ENCODE measurements at regions of chr2 and their contacts with region 1.

Region 1: DNA sequence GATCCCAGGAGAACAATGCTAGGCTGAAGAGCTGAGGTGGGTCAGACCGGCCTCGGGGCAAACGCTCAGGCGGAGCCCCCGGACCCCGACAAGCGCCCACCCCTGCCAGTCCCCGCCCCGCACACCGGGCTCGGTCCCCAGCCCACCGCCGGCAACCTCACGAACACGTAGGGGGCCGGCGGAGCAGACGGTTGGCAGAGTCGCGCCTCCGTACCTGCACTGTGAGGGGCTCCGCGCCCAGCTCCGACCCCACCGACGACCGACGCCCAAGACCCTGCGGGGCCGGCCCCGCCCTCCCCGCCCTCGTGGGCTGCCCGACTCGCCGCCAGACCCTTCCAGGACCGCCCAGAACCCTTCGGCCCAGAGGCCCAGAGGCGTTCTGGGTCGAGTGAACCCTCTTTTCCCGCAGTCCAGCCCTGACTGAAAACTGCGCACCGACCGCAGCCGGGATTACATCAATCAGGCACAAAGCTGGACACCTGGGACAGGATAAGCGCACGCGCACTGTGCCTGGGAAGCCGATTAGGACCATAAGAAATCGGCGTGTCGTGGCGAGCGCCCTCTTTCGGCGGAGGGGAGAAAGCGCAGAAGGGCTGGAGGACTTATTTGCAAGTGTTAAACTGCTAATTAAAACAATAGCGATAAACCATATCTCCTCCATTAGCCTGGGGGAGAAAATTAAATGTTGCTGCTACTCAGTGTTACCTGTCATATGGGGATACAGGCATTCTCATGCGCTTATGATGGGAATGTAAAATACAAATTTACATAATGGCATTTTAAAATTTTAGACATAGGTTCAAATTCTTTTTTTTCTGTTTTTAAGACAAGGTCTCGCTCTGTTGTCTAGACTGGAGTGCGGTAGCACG is 11.7 kb upstream of the DCTN1 start:
- DNase-seq: peak; percentile 90 to 98
- H3K4me3 ChIP-seq: peak overlapping the region; percentile 86 to 96 (median 90)
- H3K27ac ChIP-seq: peak overlapping the region; percentile 98
- H3K4me1 ChIP-seq: peaks cover 0 to 3% (median 0%) of the 10 kb centered on the region in 4 experiments; a peak in 4 of 7 replicates
- H3K27me3 ChIP-seq: no peaks in the 10 kb centered on the region
- CTCF ChIP-seq: peak; percentile 75 to 98 (median 97)
- EP300 ChIP-seq: no peak
- POLR2A ChIP-seq: peak in 1 of 2 experiments; percentile 93; a peak in 2 of 3 replicates
- RAD21 ChIP-seq: peak; percentile 41 to 42

Region 2: DNA sequence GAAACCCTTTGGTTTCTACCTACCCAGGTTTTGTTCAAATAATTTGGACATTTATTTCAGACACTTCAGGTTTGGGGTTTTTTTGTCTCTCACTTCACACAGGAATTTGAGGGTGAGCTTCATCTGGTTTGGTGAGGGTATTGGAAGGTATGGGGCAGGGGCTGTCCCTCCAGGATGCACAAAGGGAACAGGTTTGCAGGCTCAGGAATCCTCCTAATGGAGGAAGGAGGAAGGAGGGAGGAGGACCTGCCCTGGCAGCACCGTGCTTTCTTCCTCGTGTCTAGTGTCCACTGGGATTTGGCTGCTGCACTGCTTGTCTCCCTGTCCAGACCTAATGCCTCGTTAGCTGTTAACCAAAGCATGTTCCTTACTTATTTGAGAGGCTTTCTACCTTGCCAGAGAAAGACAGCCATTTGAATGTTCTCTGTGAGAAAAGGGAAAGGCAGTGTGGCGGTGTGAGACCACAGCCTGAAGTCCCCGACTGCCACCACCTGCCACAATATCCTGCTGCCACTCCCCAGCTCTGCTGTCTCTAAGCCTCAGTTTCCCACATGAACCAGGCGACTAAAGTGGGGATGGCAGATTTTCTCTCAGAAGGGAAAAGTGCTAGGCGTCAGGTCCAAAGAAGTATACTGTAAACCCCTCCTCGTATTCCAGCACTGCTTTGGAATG is 46.4 kb before region 1 on chr2:
- CTCF ChIA-PET with region 1: interaction called, 15 read pairs
- POLR2A ChIA-PET with region 1: no interaction called
- DNase-seq: no peak
- H3K4me3 ChIP-seq: no peak overlapping the region
- H3K27ac ChIP-seq: no peak overlapping the region
- H3K4me1 ChIP-seq: no peaks in the 10 kb centered on the region
- H3K27me3 ChIP-seq: no peaks in the 10 kb centered on the region
- CTCF ChIP-seq: no peak
- EP300 ChIP-seq: no peak
- POLR2A ChIP-seq: no peak
- RAD21 ChIP-seq: no peak

Region 3: GRCh38 chr2:74357627-74358026 is 34.2 kb before region 1 on chr2:
- CTCF ChIA-PET with region 1: interaction called, 15 read pairs
- POLR2A ChIA-PET with region 1: interaction called, 12 read pairs
- DNase-seq: no peak
- H3K4me3 ChIP-seq: no peak overlapping the region
- H3K27ac ChIP-seq: no peak overlapping the region
- H3K4me1 ChIP-seq: peaks cover 0 to 2% (median 0%) of the 10 kb centered on the region in 4 experiments; a peak in 2 of 7 replicates
- H3K27me3 ChIP-seq: no peaks in the 10 kb centered on the region
- CTCF ChIP-seq: no peak
- EP300 ChIP-seq: no peak
- POLR2A ChIP-seq: no peak
- RAD21 ChIP-seq: no peak

Region 4: DNA sequence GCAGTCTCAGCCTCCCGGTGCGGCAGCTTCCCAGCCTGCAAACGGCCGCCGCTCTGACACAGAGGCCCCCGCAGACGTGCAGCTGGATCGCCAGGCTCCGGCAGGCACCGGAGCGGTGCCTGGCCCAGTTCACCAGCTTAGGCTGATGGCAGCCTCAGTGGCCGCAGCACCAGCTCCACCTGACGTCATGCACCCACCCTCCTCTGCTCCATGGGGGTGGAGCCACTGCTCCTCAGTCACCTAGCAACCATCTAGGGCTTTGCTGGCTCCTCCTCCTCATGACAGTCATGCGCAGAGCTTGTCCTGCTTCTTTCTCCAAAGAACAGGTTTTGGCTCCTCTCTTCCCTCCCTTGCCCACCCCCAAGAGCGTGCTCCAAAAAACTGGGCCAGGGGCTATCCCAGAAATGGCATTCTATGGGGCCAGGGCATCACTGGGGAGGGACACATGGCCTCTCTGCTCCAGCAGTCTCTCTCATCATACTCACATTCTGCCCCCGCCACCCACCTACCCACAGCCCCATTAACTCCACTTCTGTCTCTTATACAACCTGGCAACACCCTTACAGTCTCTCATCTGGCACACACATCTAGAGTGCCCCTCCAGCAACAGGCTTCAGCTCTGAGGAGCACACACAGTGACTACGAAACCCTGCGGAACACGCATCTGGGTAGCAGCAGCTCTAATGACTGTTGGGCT is 17.2 kb before region 1 on chr2:
- CTCF ChIA-PET with region 1: interaction called, 16 read pairs
- POLR2A ChIA-PET with region 1: interaction called, 15 read pairs
- DNase-seq: peak; percentile 59 to 87
- H3K4me3 ChIP-seq: peak overlapping the region; percentile 27 to 59 (median 53); a peak in 7 of 8 replicates
- H3K27ac ChIP-seq: peak overlapping the region; percentile 61; the same call in 1 of the 2 replicates
- H3K4me1 ChIP-seq: peaks cover 9 to 22% (median 13%) of the 10 kb centered on the region in 4 experiments
- H3K27me3 ChIP-seq: no peaks in the 10 kb centered on the region
- CTCF ChIP-seq: no peak
- EP300 ChIP-seq: no peak
- POLR2A ChIP-seq: peak in 1 of 2 experiments; percentile 67; a peak in 1 of 3 replicates
- RAD21 ChIP-seq: no peak

Region 5: DNA sequence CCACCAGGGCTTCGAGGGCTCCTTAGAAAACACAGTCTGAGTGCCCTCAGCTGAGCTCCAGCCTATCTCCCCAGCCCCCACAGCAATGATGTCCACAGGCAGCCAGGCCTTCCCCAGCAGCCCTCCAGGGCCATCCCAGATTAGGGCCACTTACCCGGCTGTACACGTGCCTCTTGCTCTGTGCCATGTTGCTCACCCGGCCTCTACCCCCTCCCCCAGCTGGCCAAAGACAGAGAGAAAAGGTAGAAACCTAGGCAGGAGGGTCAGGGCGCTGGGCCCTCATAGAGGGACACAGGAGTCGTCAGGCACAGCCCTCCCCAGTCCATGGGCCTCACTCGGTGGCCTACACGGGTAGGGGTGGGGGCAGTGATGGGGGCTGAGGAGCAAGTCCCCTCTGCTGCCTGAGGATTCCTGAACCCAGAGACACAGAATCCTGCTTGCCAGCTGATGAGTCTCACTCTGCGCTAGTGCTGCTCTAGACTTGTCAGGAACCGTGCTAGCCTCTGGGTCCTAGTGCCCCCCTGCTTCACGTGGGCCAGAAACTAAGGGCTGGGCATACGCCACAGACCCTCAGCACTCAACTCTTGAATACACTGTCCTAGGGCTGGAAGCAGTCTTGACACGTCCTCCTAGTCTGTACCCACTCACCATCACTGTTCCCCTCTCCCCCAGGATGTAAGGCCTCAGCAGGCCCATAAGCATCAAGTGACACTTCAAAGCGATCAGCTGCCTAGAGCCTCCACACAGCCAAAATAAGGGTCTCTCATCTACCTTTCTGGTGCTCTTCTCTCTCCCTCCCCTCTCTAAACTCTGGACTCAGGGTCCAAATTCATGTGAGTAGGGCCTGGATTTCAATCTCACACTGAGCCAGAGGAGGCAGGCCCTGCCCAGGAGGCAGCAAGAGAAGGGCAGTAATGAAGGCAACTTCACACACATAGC is 11.7 kb before region 1 on chr2 and contains the start of gene DCTN1:
- CTCF ChIA-PET with region 1: interaction called, 16 read pairs
- POLR2A ChIA-PET with region 1: interaction called, 15 read pairs
- DNase-seq: peak in 1 of 2 experiments; percentile 63
- H3K4me3 ChIP-seq: peak within 1 kb of the TSS in 3 of 4 experiments; percentile 23 to 50 (median 40); a peak in 6 of 8 replicates
- H3K27ac ChIP-seq: peak within 1 kb of the TSS; percentile 36; the same call in 1 of the 2 replicates
- H3K4me1 ChIP-seq: peaks cover 0 to 10% (median 7%) of the 10 kb centered on the region in 4 experiments; a peak in 6 of 7 replicates
- H3K27me3 ChIP-seq: no peaks in the 10 kb centered on the region
- CTCF ChIP-seq: no peak
- EP300 ChIP-seq: no peak
- POLR2A ChIP-seq: no peak
- RAD21 ChIP-seq: no peak
- total RNA-seq, gene DCTN1: 156 and 162 TPM in 2 replicates

Region 6: GRCh38 chr2:74440378-74441169 is 48.8 kb after region 1 on chr2:
- CTCF ChIA-PET with region 1: interaction called, 4 read pairs
- POLR2A ChIA-PET with region 1: interaction called, 16 read pairs
- DNase-seq: peak in 1 of 2 experiments; percentile 92
- H3K4me3 ChIP-seq: peak overlapping the region; percentile 69 to 90 (median 80)
- H3K27ac ChIP-seq: peak overlapping the region; percentile 87
- H3K4me1 ChIP-seq: peaks cover 4 to 24% (median 17%) of the 10 kb centered on the region in 4 experiments; a peak in 6 of 7 replicates
- H3K27me3 ChIP-seq: no peaks in the 10 kb centered on the region; a peak in 2 of 7 replicates
- CTCF ChIP-seq: peak in 2 of 3 experiments; percentile 12 to 18; a peak in 2 of 4 replicates
- EP300 ChIP-seq: no peak
- POLR2A ChIP-seq: peak in 1 of 2 experiments; percentile 50; a peak in 1 of 3 replicates
- RAD21 ChIP-seq: no peak

Region 7: DNA sequence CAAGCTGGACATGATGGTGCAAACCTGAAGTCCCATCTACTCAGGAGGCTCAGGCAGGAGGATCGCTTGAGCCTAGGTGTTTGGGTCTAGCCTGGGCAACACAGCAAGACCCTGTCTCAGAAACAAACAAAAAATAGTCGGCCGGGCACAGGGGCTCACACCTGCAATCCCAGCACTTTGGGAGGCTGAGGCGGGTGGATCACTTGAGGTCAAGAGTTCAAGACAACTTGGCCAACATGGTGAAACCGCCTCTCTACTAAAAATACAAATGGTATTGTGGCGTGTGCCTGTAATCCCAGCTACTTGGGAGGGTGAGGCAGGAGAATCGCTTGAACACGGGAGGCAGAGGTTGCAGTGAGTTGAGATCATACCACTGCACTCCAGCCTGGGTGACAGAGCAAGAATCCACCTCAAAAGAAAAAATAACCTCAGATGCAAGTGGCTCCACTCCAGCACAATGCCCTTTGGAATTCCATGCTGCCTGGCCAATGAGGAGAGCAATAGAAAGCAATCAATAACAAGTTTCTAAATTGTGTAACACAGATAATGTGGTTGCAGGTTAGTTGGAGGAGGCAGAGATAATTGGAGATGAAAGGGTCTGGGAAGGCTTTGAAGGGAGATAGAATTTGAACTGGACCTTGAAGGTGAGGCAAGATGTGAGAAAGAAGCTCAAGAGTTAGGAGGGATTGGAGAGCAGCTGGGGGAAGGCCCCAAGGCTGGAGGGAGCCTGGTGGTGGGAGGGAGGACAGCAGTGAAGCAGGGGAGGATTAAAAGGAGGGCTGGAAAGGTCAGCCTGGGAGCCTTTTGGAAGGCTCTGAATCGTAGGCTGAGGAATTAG is 97.0 kb after region 1 on chr2:
- CTCF ChIA-PET with region 1: no interaction called
- POLR2A ChIA-PET with region 1: no interaction called
- DNase-seq: no peak
- H3K4me3 ChIP-seq: no peak overlapping the region
- H3K27ac ChIP-seq: no peak overlapping the region
- H3K4me1 ChIP-seq: no peaks in the 10 kb centered on the region
- H3K27me3 ChIP-seq: no peaks in the 10 kb centered on the region
- CTCF ChIP-seq: no peak
- EP300 ChIP-seq: no peak
- POLR2A ChIP-seq: no peak
- RAD21 ChIP-seq: no peak

Measured in H1 (cell line).